Cardiac septum (tissue), 1 donor: ENCODE measurements at regions of chr4 and their contacts with region 1.

Region 1: DNA sequence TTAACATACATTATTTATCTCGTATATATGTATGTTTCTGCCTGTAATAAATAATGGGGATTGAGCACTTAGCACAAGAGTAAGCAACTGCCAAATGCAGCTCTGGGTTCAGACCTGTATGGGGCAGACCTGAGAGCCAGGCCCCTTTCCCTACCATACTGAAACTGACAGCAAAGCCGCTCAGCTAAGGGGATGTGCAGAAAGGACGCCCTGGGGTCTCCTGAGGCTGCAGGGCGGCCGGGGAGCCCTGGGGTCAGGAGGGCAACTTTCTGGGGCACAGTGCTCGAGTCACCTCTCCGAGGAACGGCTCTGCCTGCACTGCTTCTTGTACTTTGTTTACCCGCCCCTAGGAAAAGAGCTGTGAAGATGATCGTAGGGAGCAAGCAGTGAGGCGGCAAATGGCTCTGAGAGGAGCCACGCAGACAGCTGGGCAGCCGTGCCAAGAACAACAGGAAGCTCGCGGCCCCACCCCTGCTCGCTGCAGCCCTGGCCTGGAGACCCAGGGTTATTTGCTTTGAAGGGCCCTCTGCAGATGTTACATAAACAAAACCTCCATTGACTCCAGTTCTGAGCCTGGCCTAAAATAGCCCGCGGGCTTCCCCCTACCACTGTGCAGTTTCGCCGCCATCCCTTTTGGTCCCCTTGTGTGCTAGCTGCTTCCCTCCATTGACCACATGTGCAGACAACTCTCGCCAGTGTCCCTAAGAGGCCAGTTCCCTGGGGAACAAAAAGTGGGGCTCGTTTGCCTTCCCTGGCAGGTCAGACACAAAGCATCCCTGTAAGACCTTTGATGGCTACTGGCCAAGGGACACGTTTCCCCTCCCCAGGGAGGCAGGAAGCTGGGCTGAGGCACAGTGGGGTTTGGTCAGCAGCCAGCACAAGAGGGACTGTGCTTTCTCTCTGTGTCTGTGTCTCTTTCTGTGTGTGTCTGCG is 111.3 kb upstream of the LNX1 start:
- DNase-seq: peak; percentile 85

Region 2: GRCh38 chr4:53015681-53016080 is 686.9 kb before region 1 on chr4:
- intact Hi-C with region 1: loop called (anchors 10 kb)
- DNase-seq: no peak

Region 3: GRCh38 chr4:53507671-53508286 is 194.8 kb before region 1 on chr4:
- intact Hi-C with region 1: loop called (anchors 5 kb)
- DNase-seq: peak; percentile 80

Region 4: GRCh38 chr4:53730031-53730805 is 27.6 kb after region 1 on chr4:
- intact Hi-C with region 1: no loop called
- DNase-seq: no peak

Region 5: GRCh38 chr4:53855581-53856250 is 153.1 kb after region 1 on chr4:
- intact Hi-C with region 1: loop called (anchors 5 kb)
- DNase-seq: no peak

Region 6: GRCh38 chr4:53908661-53909078 is 206.1 kb after region 1 on chr4:
- intact Hi-C with region 1: loop called (anchors 5 kb)
- DNase-seq: no peak

Region 7: DNA sequence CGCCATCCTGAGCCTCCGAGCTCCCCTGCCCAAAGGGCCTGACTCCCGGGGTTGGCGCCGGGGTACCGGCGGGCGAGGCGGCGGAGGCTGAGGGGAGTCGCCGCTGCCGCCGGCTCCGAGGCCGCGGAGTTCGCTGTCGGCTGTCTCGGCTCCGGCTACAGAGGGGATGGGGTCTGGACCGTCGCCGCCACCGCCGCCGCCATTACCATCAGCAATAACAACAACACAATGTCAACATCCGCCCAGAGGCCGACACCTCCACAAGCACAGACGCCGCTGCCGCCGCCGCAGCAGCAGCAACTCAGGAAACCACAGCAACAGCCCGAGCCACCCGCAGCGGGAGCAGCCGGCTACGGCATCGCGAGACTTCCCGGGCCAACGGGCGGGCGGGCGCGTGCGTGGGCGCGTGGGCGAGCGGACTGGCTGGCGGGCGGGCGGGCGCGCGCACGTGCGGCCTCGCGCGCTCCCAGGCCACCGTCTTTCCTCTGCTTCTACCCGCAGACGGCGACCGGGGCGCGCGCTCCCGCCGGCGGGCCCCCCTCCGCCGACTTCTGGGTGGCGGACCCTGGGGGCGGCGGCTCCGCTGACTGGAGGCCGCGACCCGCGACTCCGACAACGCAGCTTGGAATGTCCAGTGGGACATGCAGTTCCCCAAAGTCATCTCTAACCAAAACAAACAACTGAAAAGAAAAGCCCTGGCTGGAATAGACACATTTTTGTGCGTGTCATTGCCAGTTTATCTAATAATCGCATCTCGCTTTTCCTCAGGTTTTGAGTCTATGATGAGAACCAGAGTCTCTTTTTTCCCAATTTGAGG is 361.9 kb after region 1 on chr4 and contains the start of gene CHIC2:
- intact Hi-C with region 1: loop called (anchors 10 kb)
- DNase-seq: peak; percentile 98
- total RNA-seq, gene CHIC2: 12.4 TPM

Region 8: DNA sequence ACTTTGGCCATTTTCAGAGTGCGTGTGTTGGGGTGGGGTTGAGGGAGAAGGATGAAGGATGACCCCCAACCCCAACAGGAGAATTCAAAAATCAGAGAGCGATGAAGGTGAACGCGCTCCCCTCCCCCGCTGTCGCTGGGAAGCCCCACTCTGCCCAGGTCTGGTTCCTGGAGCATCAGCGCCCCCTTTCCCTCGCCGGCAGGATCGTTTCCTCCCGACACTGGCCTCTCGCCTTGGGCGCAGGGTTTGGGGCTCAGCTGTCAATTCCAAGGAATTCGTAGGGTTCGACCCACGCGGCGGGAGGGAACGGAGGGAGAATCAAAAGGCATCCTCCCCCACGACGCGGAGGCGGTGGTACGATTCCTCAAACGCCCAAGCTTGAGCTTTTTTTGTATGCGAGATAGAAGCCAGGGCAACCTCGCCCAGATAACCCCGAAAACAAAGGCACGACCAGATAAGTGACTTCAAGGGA is 525.5 kb after region 1 on chr4:
- intact Hi-C with region 1: loop called (anchors 5 kb)
- DNase-seq: no peak